GM12878 (cell line): ENCODE measurements at regions of chr3 and their contacts with region 1.

Region 1: DNA sequence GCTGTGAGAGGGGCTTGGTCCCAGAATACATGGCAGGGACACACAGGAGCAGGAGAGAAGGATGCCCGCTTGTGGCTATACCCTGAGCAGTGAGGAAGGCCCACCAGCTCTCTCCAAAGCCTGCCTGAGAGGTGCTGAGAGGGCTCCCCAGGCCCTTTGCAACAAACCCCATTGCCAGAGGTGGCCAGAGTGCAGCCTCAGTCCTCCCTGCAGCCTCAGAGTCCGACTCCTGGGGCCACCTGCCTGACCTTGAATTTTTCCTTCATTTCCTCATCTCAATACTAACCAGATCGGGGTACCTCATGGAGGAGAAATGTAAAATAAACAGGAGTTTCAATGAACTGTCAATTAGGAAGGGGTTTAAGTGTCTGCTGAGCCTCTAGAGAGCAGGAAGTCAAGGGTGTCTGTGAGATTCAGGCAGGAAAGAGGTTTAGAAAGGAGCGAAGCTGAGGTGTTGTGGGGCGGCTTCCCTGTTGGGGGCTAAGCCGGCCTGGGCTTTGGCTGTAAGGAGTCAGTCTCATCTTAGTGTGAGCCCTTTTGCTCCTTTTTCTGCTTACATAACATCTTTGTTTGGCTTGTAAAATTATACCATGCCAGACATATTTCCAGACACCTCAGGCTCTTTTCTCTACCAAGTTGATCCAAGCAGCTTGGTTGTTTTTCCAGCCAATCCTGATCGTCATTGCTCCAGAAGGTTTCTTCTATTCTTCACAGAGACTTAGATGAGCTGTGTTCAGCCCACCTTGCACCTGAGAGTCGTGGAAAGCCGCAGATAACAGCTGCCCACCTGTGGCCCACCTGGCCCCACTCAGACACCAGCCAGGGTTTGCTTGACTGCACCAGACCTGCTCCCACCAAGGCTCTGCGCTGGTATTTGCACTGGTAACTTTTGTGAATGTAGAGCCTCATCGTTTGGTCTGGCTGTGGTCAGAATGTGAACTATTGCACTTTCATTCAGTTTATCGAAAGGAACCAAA is 36.7 kb downstream of the CMTM7 start:
- DNase-seq: no peak
- ATAC-seq: peak; percentile 81
- H3K4me3 ChIP-seq: no peak overlapping the region
- H3K27ac ChIP-seq: no peak overlapping the region
- H3K4me1 ChIP-seq: peaks cover 39% of the 10 kb centered on the region
- H3K27me3 ChIP-seq: no peaks in the 10 kb centered on the region; a peak in 1 of 4 replicates
- CTCF ChIP-seq: no peak
- EP300 ChIP-seq: peak; percentile 71 to 83; a peak in 2 of 4 replicates
- POLR2A ChIP-seq: no peak
- RAD21 ChIP-seq: no peak

Region 2: DNA sequence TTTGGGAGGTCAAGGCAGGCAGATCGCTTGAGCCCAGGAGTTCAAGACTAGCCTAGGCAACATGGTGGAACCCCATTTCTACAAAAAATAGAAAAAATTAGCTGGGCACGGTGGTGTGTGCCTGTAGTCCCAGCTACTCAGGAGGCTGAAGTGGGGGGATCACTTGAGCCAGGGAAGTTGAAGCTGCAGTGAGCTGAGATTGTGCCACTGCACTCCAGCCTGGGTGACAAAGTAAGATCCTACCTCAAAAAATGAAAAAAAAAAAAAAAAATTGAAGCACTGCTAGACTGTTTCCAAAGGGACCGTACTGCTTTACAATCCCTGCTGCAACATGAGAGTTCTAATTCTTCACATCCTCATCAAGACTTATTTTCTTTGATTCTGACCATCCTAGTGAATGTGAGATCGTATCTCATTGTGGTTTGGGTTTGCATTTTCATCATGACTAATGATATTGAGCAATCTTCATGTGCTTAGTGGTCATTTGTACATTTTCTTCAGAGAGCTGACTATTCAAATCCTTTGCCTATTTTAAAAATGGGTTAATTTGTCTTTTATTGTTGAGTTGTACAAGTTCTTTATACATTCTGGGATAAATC is 179.1 kb before region 1 on chr3:
- CTCF ChIA-PET with region 1: no interaction called
- POLR2A ChIA-PET with region 1: no interaction called
- RAD21 ChIA-PET with region 1: no interaction called
- SMC1A ChIA-PET with region 1: no interaction called
- in situ Hi-C with region 1: no loop called
- intact Hi-C with region 1: no loop called
- DNase-seq: no peak
- ATAC-seq: no peak
- H3K4me3 ChIP-seq: no peak overlapping the region
- H3K27ac ChIP-seq: no peak overlapping the region
- H3K4me1 ChIP-seq: no peaks in the 10 kb centered on the region
- H3K27me3 ChIP-seq: no peaks in the 10 kb centered on the region
- CTCF ChIP-seq: no peak
- EP300 ChIP-seq: no peak
- POLR2A ChIP-seq: no peak
- RAD21 ChIP-seq: no peak

Region 3: GRCh38 chr3:32414520-32415202 is 13.7 kb before region 1 on chr3:
- CTCF ChIA-PET with region 1: interaction called, 13 read pairs
- POLR2A ChIA-PET with region 1: interaction called, 12 read pairs
- RAD21 ChIA-PET with region 1: interaction called, 45 read pairs
- SMC1A ChIA-PET with region 1: interaction called, 307 read pairs
- in situ Hi-C with region 1: no loop called
- intact Hi-C with region 1: no loop called
- DNase-seq: no peak
- ATAC-seq: peak; percentile 85
- H3K4me3 ChIP-seq: no peak overlapping the region
- H3K27ac ChIP-seq: no peak overlapping the region
- H3K4me1 ChIP-seq: peaks cover 3% of the 10 kb centered on the region
- H3K27me3 ChIP-seq: no peaks in the 10 kb centered on the region
- CTCF ChIP-seq: no peak
- EP300 ChIP-seq: no peak
- POLR2A ChIP-seq: no peak
- RAD21 ChIP-seq: no peak

Region 4: GRCh38 chr3:32460031-32460749 is 31.8 kb after region 1 on chr3:
- CTCF ChIA-PET with region 1: interaction called, 41 read pairs
- POLR2A ChIA-PET with region 1: interaction called, 8 read pairs
- RAD21 ChIA-PET with region 1: interaction called, 5 read pairs
- SMC1A ChIA-PET with region 1: interaction called, 16 read pairs
- in situ Hi-C with region 1: no loop called
- intact Hi-C with region 1: loop called (anchors 5 kb)
- DNase-seq: no peak
- ATAC-seq: peak; percentile 76
- H3K4me3 ChIP-seq: peak overlapping the region; percentile 30; the same call in 1 of the 2 replicates
- H3K27ac ChIP-seq: no peak overlapping the region
- H3K4me1 ChIP-seq: peaks cover 36% of the 10 kb centered on the region
- H3K27me3 ChIP-seq: no peaks in the 10 kb centered on the region
- CTCF ChIP-seq: no peak
- EP300 ChIP-seq: no peak
- POLR2A ChIP-seq: no peak
- RAD21 ChIP-seq: no peak